ENCODE measurements at regions of chr6 and their contacts with region 1.

Region 1: DNA sequence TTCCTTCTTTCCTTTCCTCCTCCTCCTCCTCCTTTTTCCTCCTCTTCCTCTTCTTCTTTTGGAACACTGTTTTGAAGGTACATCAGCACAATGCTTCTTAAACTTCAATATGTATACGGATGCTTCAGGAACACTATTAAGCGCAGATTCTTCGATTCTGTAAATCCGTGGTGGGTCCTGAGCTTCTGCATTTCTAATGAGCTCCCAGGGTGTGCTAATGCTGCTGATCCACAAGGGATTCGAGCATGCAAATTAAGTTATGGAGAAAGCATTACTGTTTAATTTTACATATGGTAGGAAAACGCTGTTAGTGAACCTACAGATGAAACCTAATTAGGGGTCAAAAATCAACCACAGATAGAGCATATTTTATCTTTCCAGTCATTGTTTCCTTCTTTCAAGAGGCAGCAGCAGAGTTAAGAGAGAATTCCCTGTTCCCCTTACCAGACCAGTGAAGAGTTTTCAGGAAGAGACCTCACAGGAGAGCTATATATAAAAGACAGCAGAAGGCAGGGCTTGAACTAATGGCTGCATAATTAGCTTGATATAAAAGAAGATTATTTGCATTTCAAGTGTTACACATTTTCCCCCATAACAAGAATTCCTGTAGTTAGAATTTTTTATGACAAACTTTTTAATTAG is 47.2 kb downstream of the KIF13A start:
- DNase-seq: no peak
- H3K4me3 Mint-ChIP-seq: no peak overlapping the region
- H3K27ac Mint-ChIP-seq: no peak overlapping the region
- H3K4me1 Mint-ChIP-seq: no peaks in the 10 kb centered on the region
- H3K27me3 Mint-ChIP-seq: no peaks in the 10 kb centered on the region
- CTCF ChIP-seq: no peak

Region 2: DNA sequence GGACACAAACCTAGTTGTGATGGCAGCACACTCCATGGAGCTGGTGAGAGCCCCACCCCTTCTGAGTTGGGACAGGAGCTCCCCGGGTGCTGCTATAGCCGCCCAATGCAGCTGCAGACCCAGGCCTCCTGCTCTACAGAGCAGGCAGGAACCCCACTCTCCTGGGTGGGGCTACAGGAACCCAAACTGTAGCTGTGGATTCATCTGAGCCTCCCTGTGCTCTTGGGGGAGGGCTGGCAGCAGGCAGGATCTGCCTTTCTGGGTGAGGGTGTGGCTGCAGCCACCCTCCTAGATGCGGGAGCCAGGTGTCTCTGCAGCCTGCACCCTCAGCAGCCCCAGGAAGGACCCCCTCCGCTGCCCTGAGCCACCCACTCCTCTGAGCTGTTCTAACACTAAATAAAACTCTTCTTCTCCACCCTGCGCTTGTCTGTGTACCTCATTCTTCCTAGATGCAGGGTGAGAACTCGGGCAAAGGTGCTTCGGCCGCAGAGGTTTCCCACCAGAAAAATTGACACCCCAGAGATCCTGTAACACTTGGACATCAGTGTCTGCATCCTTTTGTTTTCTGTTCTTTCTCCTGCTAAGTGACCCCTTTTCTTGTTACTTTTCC is 102.4 kb after region 1 on chr6:
- CTCF ChIA-PET with region 1: interaction called, 10 read pairs
- intact Hi-C with region 1: no loop called
- DNase-seq: no peak
- H3K4me3 Mint-ChIP-seq: no peak overlapping the region
- H3K27ac Mint-ChIP-seq: no peak overlapping the region
- H3K4me1 Mint-ChIP-seq: peaks cover 9% of the 10 kb centered on the region
- H3K27me3 Mint-ChIP-seq: no peaks in the 10 kb centered on the region
- CTCF ChIP-seq: no peak

Measured in Calu3 (cell line).